ENCODE measurements at regions of chr2 and their contacts with region 1.

Region 1: DNA sequence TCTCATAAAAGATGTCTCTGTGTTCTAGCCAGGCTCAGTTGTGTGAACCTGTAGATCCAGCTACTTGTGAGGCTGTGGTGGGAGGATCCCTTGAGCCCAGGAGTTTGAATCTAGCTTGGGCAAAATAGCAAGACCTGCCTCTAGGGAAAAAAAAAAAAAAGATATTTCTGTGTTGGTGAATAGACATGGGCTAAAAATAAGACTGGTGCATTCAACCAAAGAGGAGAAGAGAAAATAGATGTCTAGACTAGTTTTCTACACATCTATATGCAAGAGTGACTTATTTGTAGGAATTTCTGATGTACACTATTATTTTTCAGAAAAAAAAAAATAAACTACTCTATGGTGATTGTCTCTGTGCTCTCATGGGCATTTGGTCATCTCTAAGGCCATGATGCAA is 555.1 kb downstream of the BCL11A start:
- DNase-seq: no peak
- H3K27ac ChIP-seq: no peak overlapping the region
- CTCF ChIP-seq: no peak

Region 2: GRCh38 chr2:59963157-59963556 is 35.2 kb before region 1 on chr2:
- CTCF ChIA-PET with region 1: no interaction called
- POLR2A ChIA-PET with region 1: interaction called, 10 read pairs
- DNase-seq: no peak
- H3K27ac ChIP-seq: no peak overlapping the region
- CTCF ChIP-seq: no peak

Region 3: DNA sequence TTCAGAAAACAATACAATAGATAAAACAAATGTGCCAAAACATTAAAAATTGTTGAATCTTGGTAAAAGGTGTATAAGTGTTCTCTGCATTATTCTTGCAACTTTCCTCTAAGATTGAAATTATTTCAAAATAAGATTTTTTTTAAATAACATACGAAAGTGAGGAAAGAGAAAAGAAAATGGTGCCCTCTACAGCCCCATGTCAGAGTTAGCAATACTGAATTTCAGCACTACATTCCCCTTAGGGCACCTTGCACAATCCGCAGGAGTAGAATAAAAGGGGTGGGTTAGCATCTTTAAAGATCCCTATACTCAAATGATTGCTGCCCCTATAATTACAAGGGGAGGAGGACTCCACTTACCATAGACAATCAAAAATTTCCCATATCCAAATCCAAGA is 121.5 kb after region 1 on chr2:
- CTCF ChIA-PET with region 1: no interaction called
- POLR2A ChIA-PET with region 1: no interaction called
- DNase-seq: no peak
- H3K27ac ChIP-seq: no peak overlapping the region
- CTCF ChIP-seq: no peak

Measured in RWPE1 (cell line).